GM10248 (cell line): ENCODE measurements at regions of chr6 and their contacts with region 1.

Region 1: DNA sequence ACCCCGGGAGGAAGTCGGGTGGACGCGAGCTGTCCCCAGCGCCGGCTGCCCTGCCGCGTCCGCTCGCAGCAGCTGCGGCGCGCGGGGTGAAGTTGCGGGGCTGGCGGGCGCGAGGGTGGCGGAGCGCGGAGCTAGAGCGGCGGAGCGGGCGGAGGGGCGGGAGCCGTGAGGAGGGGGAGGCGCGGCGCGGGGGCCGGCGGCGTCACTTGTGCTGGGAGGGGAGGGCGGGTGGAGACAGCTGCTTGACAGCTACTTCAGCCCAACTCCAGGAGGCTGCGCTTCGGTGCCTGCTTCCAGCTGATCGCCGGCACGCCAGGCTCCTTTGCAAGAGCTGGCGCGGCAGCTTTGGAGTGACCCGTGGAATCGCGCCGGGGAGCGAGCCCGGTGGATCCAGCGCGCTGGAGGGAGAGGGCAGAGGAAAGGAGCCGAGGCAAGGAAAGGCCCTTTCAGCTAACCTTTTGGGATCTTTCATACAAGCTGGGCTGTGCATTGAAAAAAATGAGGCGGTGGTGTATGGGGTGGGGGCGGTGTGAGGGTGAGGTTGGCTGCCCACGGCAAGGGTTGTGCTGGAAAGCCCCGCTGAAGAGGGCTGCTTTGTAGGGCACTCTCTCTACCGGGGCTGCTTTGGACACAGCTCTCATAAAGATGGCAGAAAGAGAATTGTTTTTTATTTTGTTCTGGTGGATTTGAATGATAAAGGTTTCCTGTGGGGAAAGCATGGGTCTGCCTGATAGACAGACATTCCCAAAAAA is 24.6 kb downstream of the RIPOR2 start:
- DNase-seq: peak; percentile 48
- CTCF ChIP-seq: no peak

Region 2: DNA sequence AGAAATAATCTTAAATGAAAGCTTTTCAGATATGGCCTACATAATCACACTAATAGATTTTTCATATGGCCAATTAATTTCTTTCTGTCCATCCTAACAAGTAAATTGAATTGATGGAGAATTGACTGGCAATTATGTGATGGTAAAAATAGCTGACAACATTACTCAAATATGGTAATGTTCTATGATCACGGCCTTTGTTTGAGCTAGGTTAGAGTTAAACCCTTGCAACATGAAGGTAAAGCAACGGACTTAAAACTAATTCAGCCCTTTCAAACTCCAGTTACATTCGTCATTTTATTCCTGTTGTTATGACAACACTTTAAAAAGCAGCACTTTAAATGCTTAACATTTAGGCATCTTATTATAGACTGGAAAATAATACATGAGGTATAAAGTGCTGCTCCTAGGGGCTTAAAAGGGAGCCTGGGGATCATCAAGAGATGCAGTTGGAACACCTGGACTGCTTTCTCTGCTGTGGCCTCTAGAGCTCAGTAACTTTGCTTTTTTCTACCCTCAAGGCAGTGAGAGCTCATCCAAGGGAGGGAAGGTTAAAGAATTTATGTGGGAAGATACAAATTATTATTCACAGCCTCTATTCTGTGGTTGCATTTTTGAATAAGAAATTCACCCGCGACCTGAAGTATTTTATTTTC is 22.3 kb before region 1 on chr6:
- CTCF ChIA-PET with region 1: interaction called, 16 read pairs
- POLR2A ChIA-PET with region 1: no interaction called
- DNase-seq: no peak
- CTCF ChIP-seq: no peak

Region 3: GRCh38 chr6:24924580-24925356 is 13.6 kb after region 1 on chr6:
- CTCF ChIA-PET with region 1: interaction called, 16 read pairs
- POLR2A ChIA-PET with region 1: no interaction called
- DNase-seq: no peak
- CTCF ChIP-seq: no peak

Region 4: GRCh38 chr6:25002326-25003091 is 91.4 kb after region 1 on chr6:
- CTCF ChIA-PET with region 1: no interaction called
- POLR2A ChIA-PET with region 1: no interaction called
- DNase-seq: no peak
- CTCF ChIP-seq: no peak

Region 5: DNA sequence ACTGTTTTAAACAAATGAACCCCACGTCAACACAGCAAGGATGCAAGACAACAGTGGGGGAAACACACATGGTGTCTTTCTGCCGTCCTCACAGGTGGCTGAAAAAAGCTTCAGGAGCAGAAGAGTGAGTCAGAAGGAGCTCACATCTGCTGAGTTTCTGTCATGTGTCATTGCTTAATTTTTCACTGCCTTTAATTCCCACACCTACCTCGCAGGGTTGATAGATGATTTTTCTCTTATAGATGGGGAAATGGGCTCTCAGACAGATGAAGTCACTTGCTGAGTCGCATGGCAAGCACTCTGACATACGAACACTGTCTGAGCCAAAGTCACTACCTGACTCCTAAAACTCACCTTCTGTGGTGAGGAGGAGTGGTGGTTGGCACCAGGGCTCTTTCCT is 339.7 kb after region 1 on chr6:
- CTCF ChIA-PET with region 1: no interaction called
- POLR2A ChIA-PET with region 1: no interaction called
- DNase-seq: peak; percentile 29
- CTCF ChIP-seq: no peak